Lower leg skin (tissue), 4 donors: ENCODE measurements at regions of chr14 and their contacts with region 1.

Region 1: DNA sequence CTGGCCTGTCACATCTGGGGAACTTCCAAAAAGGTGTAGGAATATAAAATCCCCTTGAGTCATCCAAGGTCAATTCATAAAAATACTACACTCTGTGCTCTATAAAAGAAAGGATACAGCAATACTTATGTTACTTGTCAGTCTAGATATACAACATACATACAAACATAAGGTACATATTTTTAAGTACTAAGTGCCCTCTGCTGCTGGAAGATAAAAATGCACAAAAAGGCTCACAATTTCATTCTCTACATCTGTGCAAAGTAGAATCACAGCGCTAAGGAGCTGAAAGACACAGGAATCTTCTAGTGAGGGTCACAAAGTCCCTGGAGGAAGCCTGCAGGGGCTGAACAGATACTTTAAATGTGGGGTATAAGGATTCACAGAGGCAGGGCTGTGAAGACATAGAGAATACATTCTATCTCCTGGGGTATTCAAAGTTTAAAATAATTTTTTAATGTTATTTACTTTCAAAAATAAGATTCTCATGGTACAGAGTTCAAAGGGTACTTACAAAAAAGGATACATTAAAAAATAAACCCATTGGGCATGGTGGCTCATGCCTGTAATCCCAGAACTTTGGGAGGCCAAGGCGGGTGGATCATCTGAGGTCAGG is 10.2 kb upstream of the GOLGA5 start:
- DNase-seq: peak in 1 of 2 donors; percentile 46
- H3K4me3 ChIP-seq: no peak overlapping the region
- CTCF ChIP-seq: no peak
- POLR2A ChIP-seq: no peak

Region 2: DNA sequence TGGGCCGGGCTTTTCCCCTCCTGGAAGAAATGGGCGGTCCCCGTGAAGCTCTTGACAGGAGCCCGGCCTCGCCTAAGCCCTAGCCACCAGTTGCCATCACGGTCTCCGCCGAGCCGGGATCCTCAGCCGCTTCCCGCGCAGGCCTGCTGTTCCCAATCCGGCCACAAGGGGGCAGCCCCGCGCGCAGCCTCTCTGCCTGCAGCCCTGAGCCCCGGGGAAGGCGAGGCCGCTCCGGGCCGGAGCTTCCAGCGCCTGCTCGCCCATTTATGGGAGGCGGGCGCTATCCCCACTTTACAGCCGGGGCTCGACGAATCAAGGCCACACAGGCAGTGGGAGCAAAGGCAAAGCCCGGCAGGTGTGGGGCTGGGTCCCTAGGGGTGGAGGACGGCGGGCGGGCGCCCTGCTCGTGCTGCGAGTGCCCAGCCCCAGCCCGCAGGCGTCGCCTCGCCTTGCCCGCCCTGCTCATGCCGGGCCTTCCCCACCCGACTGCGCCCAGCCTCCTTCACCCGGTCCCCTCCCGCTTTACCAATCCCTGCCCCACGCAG is 97.0 kb before region 1 on chr14:
- intact Hi-C with region 1: loop called (anchors 10 kb)
- DNase-seq: peak; percentile 54 to 96
- H3K4me3 ChIP-seq: no peak overlapping the region
- CTCF ChIP-seq: peak in 2 of 3 donors; percentile 38 to 78
- POLR2A ChIP-seq: no peak

Region 3: DNA sequence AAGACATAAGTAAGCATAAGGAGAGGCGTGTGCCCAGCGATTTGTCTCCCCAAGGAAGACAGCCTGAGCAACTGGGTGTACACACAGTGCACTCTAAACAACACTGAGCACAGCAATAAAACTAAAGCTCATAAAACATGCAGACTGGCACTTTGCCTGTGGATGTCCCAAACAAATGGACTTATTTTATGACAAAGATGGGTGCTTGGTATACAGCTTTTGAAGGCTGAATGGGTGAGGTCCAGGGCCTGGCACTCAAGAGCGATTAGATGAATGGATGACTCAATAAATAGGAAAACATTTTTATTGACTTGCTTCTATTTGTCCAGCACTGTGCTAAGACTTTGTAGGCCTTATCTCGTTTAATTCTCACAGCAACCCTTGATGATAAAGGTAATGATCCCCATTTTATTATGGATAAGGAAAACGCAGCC is 64.0 kb before region 1 on chr14:
- intact Hi-C with region 1: loop called (anchors 10 kb)
- DNase-seq: peak in 1 of 2 donors; percentile 47
- H3K4me3 ChIP-seq: no peak overlapping the region
- CTCF ChIP-seq: no peak
- POLR2A ChIP-seq: no peak

Region 4: GRCh38 chr14:93847473-93847872 is 1063.5 kb after region 1 on chr14:
- intact Hi-C with region 1: no loop called
- DNase-seq: no peak
- H3K4me3 ChIP-seq: no peak overlapping the region
- CTCF ChIP-seq: no peak
- POLR2A ChIP-seq: no peak